Activated CD8-positive, alpha-beta T cell treated with anti-CD3 and anti-CD28 coated beads, Interleukin-2, amount 10 ng/mL, durations not matched to agents 7 days and 5 days (primary cell): ENCODE measurements at regions of chr1 and their contacts with region 1.

Region 1: GRCh38 chr1:48202030-48202752 is 20.3 kb upstream of the SLC5A9 start:
- DNase-seq: peak; percentile 71
- ATAC-seq: peak; percentile 23
- H3K4me3 Mint-ChIP-seq: no peak overlapping the region
- H3K27ac Mint-ChIP-seq: no peak overlapping the region
- H3K4me1 Mint-ChIP-seq: no peaks in the 10 kb centered on the region
- H3K27me3 Mint-ChIP-seq: peaks cover 4% of the 10 kb centered on the region

Region 2: DNA sequence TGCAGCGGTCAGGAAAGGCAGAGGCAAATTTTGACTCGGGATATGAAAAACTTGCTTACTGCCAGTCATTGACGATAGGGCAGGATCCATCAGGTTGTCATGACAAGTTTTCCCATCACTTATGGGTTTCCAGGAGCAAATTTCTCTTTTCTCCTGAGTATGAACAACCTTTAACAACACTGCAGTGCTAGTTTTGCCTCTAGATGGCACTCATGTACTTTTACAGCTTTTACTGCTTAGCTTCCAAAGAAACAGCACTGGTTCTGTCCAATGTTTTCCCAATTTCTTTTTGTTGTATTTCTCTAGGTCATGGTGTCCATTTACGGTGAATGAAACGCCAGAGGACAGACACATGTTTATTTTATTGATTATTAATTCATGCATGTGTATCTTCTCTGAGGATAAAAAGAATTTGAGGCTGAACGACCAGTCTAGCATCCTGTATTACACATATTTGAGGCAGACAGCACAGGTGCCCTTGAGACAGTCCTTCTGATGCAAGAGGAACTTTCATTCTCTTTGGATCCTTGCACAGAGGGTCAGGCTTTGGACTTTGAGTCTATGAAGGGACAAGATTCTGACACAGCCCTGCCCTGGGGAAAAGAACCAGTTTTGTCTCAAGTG is 92.7 kb before region 1 on chr1:
- CTCF ChIA-PET with region 1: interaction called, 41 read pairs
- POLR2A ChIA-PET with region 1: no interaction called
- DNase-seq: peak; percentile 35
- ATAC-seq: no peak
- H3K4me3 Mint-ChIP-seq: no peak overlapping the region
- H3K27ac Mint-ChIP-seq: no peak overlapping the region
- H3K4me1 Mint-ChIP-seq: no peaks in the 10 kb centered on the region
- H3K27me3 Mint-ChIP-seq: peaks cover 3% of the 10 kb centered on the region

Region 3: GRCh38 chr1:48139275-48139674 is 62.9 kb before region 1 on chr1:
- CTCF ChIA-PET with region 1: no interaction called
- POLR2A ChIA-PET with region 1: no interaction called
- DNase-seq: no peak
- ATAC-seq: no peak
- H3K4me3 Mint-ChIP-seq: no peak overlapping the region
- H3K27ac Mint-ChIP-seq: no peak overlapping the region
- H3K4me1 Mint-ChIP-seq: no peaks in the 10 kb centered on the region
- H3K27me3 Mint-ChIP-seq: peaks cover 13% of the 10 kb centered on the region

Region 4: GRCh38 chr1:48236716-48237470 is 34.7 kb after region 1 on chr1:
- CTCF ChIA-PET with region 1: interaction called, 14 read pairs
- POLR2A ChIA-PET with region 1: no interaction called
- DNase-seq: no peak
- ATAC-seq: no peak
- H3K4me3 Mint-ChIP-seq: no peak overlapping the region
- H3K27ac Mint-ChIP-seq: no peak overlapping the region
- H3K4me1 Mint-ChIP-seq: no peaks in the 10 kb centered on the region
- H3K27me3 Mint-ChIP-seq: no peaks in the 10 kb centered on the region

Region 5: GRCh38 chr1:48249868-48250267 is 47.7 kb after region 1 on chr1:
- CTCF ChIA-PET with region 1: no interaction called
- POLR2A ChIA-PET with region 1: no interaction called
- DNase-seq: no peak
- ATAC-seq: no peak
- H3K4me3 Mint-ChIP-seq: no peak overlapping the region
- H3K27ac Mint-ChIP-seq: no peak overlapping the region
- H3K4me1 Mint-ChIP-seq: peaks cover 14% of the 10 kb centered on the region
- H3K27me3 Mint-ChIP-seq: peaks cover 3% of the 10 kb centered on the region